Body of pancreas (tissue), 4 donors: ENCODE measurements at regions of chr5 and their contacts with region 1.

Region 1: DNA sequence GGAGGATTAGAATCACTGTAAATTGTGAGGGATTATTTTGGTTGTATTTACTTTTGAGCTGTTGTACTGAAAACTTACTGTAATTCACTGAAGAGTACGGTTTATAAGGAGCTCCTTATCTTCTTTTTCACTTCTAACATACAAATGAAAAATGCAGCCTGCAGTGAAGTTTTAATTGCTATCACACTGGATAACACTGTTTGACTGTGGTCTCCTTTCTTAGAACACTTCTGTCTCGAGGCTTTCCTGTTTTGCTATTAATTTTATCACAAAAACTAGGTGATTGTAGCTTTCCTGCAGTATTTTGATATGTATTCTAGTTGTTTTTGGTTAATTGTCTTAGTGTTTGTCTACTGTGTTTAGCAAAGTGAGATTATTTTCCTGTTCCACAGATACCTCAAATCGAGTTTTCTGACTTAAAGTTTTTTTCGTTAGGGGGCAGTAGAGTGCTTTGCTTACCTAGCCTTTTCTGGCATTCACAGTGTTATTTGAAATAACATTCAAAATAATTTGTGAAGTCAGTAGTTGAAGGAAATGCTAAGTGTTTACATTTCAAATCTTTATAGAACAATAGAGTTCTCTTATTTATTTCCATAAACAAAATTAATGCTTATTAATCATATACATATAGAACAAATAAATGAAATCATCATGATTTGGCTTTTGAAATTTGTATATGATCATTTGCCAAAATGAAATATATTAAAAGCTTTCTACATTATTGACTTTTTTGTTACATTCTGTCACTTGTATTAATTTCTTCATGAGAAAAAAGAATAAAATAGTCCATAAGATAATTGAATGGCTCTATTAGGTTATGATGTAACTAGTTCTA is 52.9 kb downstream of the COMMD10 start:
- DNase-seq: no peak
- ATAC-seq: peak; percentile 55
- H3K4me3 ChIP-seq: no peak overlapping the region
- H3K27ac ChIP-seq: no peak overlapping the region
- H3K4me1 ChIP-seq: peaks cover 6% of the 10 kb centered on the region
- H3K27me3 ChIP-seq: no peaks in the 10 kb centered on the region
- CTCF ChIP-seq: peak; percentile 45 to 81 (median 77)
- POLR2A ChIP-seq: no peak

Region 2: DNA sequence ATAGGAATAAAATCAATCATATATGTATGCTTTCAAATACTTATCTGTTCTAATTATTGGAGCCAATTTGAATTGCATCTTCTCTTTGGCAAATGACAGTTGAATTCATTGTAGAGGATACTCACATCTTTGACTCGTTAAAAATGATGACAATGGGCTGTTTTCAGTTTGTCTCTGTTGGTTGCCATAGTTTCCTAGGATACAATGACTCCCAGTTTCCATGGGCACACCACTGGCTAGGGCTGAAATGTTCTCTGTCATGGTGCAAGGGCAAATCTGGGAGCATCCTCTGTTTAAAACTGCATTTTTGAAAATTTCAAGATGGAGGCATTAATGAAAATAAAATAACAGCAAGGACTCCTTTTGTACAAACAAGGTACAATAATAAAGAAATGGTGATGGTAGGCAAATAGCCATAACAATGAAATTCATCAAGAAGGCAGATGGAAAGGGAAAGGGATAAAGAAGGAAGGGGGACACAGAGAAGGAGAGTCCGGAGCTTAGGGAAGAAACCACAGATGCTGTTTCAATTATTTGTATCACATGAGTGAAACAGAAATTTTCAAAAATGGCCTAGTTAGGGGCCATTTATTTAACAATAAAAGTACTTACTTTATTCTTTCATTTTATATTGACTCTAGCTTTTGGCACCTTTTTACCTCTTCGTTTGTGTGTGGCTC is 815.6 kb after region 1 on chr5:
- intact Hi-C with region 1: loop called (anchors 5 kb)
- DNase-seq: no peak
- ATAC-seq: no peak
- H3K4me3 ChIP-seq: no peak overlapping the region
- H3K27ac ChIP-seq: no peak overlapping the region
- H3K4me1 ChIP-seq: no peaks in the 10 kb centered on the region
- H3K27me3 ChIP-seq: no peaks in the 10 kb centered on the region
- CTCF ChIP-seq: no peak
- POLR2A ChIP-seq: no peak